IMR-90 (cell line): ENCODE measurements at regions of chr1 and their contacts with region 1.

Region 1: DNA sequence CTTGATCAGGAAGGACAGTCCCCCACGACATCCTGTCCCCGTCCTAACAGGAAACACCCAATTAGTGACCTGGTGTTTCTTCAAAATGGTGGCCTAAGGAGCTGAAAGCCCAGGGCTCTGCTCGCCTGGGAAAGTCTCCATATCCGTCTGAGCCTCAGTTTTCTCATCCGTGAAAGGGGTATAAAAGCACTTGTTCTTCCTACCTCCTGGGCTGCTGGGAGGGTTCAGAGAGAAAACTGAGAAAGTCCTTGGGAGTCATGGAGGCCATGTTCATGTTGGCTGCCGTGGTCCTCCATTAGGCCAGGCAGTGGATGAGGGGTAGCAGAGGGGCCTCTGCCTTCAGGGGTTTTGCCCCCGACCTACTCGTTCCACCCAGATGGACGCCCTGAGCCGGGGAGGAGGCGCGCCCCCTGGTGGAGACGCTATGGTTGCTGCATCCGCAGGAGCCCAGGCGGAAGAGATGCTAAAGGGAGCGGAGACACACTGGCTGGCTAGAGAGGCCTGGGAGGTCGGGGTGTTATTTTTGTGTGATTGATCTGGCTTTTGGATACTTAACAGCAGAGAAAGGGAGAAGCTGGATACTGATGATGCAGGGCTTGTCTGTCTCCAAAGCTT is 113.5 kb downstream of the PRDM2 start:
- DNase-seq: no peak
- ATAC-seq: peak; percentile 59; the same call in 1 of the 2 replicates
- H3K4me3 ChIP-seq: no peak overlapping the region
- H3K27ac ChIP-seq: no peak overlapping the region
- H3K4me1 ChIP-seq: no peaks in the 10 kb centered on the region
- H3K27me3 ChIP-seq: no peaks in the 10 kb centered on the region
- CTCF ChIP-seq: peak; percentile 53
- POLR2A ChIP-seq: no peak
- RAD21 ChIP-seq: peak; percentile 52

Region 2: DNA sequence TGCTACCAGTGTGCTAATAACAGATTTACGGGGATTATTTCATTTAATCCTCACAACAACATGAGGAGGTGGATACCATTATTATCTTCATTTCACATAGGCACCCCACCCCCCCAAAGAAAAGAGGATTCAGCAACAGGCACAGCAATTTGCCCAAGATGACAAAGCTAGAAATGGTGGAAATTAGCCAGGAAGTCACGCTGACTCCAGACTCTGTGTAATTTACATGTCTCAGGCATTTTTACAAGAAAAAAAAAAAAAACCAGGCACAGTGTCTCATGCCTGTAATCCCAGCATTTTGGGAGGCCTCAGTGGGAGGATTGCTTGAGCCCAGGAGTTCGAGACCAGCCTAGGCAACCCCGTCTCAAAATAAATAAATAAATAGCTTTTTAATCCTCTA is 151.0 kb before region 1 on chr1:
- CTCF ChIA-PET with region 1: no interaction called
- POLR2A ChIA-PET with region 1: no interaction called
- dilution Hi-C with region 1: no loop called
- in situ Hi-C with region 1: no loop called
- intact Hi-C with region 1: loop called (anchors 1 kb)
- DNase-seq: no peak
- ATAC-seq: no peak
- H3K4me3 ChIP-seq: no peak overlapping the region
- H3K27ac ChIP-seq: no peak overlapping the region
- H3K4me1 ChIP-seq: no peaks in the 10 kb centered on the region
- H3K27me3 ChIP-seq: no peaks in the 10 kb centered on the region
- CTCF ChIP-seq: no peak
- POLR2A ChIP-seq: no peak
- RAD21 ChIP-seq: no peak

Region 3: DNA sequence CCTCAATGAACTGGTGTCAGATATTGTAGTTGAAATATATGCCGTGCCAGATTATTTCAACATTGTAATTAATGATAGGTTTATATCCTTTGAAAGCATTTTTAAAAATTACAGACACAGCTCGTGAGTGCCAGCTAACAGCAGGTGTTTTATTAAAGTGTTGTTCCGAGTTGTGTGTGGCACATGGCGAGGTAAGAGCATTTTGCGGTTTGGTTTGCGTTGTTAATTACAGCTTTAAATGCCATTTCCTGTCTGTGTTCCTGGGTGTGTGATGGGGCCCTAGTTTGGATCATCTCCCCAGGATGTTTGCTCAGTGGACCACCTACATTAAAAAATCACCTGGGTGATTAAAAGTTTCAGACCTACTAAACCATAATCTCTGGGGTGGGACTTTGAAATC is 16.1 kb before region 1 on chr1:
- CTCF ChIA-PET with region 1: no interaction called
- POLR2A ChIA-PET with region 1: interaction called, 17 read pairs
- dilution Hi-C with region 1: no loop called
- in situ Hi-C with region 1: no loop called
- intact Hi-C with region 1: no loop called
- DNase-seq: no peak
- ATAC-seq: no peak
- H3K4me3 ChIP-seq: no peak overlapping the region
- H3K27ac ChIP-seq: no peak overlapping the region
- H3K4me1 ChIP-seq: peaks cover 2% of the 10 kb centered on the region
- H3K27me3 ChIP-seq: no peaks in the 10 kb centered on the region
- CTCF ChIP-seq: no peak
- POLR2A ChIP-seq: no peak
- RAD21 ChIP-seq: no peak